ENCODE measurements at regions of chr9 and their contacts with region 1.

Region 1: DNA sequence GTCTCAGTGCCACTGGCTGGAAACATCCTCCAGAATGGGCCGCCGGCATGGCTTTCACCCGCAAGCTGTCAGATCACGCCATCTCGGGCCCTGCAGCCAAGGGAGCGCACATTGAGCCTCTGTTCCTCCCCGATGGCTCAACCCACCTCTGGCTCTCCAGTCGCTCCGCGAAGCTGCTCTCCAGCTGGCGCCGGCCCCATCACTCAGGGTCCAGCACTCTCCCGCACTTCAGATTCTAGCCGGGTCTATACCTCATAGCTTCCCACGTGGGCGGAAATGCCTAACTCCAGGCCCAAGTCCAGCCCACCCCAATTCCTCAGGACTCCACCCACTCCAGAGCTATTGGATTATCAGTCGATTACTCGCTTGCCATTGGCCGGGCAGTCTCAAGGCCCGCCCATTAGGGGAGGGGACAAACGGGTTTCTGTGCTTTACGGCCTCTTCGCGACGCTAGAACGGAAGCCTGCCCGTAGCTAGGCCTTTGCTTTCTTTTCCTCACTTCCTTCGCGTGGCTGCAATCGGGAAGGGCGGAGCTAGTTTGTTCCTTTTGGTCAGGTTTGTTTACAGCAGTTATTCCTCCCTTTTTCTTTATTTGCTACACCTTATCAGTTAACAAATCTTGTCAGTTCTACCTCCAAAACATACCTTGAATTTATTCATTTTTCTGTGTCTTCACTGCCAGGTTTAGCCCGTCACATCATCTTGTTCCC is at the start of gene NOL6:
- DNase-seq: peak; percentile 100
- H3K4me3 Mint-ChIP-seq: peak within 1 kb of the TSS; percentile 95
- H3K27ac Mint-ChIP-seq: peak within 1 kb of the TSS; percentile 95
- H3K4me1 Mint-ChIP-seq: peaks cover 15% of the 10 kb centered on the region
- H3K27me3 Mint-ChIP-seq: no peaks in the 10 kb centered on the region
- total RNA-seq, gene NOL6: 86.7 and 86.8 TPM in 2 replicates

Region 2: DNA sequence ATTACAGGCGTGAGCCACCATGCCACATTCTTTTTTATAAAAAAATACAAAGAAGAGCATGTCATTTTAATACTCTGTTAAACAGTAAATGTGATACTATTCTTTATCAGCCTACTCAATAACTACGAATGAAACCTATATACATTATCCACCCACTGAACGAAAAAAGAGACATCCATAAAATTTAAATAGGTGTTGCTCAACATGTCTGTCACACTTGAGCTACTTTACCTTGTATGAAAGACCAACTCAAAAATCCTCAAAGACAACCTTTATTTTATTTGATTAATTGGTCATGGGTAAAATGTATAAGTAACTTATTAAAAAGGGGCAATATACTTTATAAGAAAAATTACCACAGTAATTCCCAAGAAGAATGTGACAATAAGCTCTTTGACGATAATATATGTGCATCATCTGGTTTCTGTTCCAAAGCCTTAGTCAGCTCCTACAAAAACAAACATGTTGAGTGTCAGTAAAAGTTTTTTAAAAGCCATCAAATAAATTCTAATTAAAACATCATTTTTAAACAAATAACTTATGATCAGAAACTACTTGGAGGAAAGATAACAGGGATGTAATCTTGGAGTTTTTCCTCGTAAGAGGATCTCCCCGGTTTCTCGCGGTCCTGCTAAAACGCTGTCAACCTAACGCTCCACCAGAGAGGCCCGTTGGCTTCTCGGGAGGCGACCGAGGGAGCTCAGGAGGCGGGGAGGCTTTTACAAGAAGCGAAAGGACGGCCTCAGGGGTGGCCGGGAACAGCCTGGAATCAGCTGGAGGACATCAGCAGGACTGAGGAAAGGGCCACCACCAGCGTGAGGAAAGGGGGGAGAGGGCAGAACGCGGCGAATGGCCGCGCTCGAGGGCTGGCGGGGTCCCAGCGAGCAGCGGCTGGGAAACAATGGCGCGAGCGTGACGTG is 36.7 kb after region 1 on chr9:
- intact Hi-C with region 1: loop called (anchors 5 kb)
- DNase-seq: peak; percentile 81
- H3K4me3 Mint-ChIP-seq: peak overlapping the region; percentile 92
- H3K27ac Mint-ChIP-seq: peak overlapping the region; percentile 90
- H3K4me1 Mint-ChIP-seq: peaks cover 12% of the 10 kb centered on the region
- H3K27me3 Mint-ChIP-seq: peaks cover 13% of the 10 kb centered on the region

Measured in activated CD4-positive, alpha-beta T cell treated with anti-CD3 and anti-CD28 coated beads, Interleukin-2, amount 10 ng/mL, durations not matched to agents 24 days and 14 days (primary cell).